ENCODE measurements at regions of chr4 and their contacts with region 1.

Region 1: DNA sequence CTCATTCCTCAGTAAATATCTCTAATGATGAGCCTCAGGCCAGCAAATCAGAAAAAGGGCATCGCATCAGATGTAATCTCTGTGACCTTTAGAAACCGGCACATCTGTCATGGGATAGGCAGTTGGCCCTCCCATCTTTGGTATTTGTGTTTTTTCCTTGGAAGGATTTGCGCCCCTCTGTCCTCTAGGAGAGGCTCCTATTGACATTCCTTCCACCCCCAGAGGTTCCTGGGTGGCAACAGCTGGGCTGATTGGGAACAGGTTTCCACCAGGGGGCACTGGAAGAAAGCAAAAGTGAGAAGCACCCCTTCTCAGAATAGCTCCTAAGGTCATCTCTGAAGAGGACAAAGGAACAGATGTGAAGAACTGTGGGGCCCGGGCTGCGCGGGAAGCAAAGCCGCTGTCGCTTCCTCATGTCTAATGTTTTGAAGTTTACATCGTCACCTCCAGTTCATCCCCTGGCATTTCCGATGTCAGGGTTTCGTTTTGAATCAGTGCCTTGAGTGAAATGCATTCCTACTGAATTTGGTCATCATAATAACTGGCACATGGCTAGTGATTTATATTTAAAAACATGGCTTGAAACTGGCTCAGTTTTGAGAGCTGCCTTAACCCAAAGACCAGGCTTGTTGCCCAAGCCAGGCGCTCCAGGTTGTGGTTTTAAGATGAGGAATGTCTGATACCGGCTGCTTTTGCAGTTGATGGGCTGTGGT is 6.2 kb downstream of the TXK start:
- DNase-seq: peak in 2 of 3 donors; percentile 47 to 65
- ATAC-seq: peak; percentile 91 to 95 (median 94)
- H3K4me3 ChIP-seq: peak overlapping the region in 1 of 3 donors; percentile 2
- H3K27ac ChIP-seq: no peak overlapping the region
- H3K4me1 ChIP-seq: no peaks in the 10 kb centered on the region
- H3K27me3 ChIP-seq: no peaks in the 10 kb centered on the region
- CTCF ChIP-seq: peak; percentile 48 to 72 (median 62)
- POLR2A ChIP-seq: no peak

Region 2: GRCh38 chr4:48269861-48270522 is 142.2 kb after region 1 on chr4:
- intact Hi-C with region 1: loop called in 1 of 2 experiments (anchors 10 kb)
- DNase-seq: peak; percentile 97 to 98 (median 98)
- ATAC-seq: peak; percentile 94 to 98 (median 95)
- H3K4me3 ChIP-seq: peak overlapping the region; percentile 85 to 92 (median 86)
- H3K27ac ChIP-seq: peak overlapping the region; percentile 87 to 92 (median 90)
- H3K4me1 ChIP-seq: peaks cover 0 to 26% (median 0%) of the 10 kb centered on the region in 4 donors
- H3K27me3 ChIP-seq: no peaks in the 10 kb centered on the region
- CTCF ChIP-seq: peak in 3 of 4 donors; percentile 15 to 36 (median 16)
- POLR2A ChIP-seq: peak; percentile 63

Measured in right lobe of liver (tissue), 6 donors.